ENCODE measurements at regions of chr7 and their contacts with region 1.

Region 1: GRCh38 chr7:43582503-43583423 is at the start of gene STK17A:
- DNase-seq: peak; percentile 99
- H3K4me3 ChIP-seq: peak within 1 kb of the TSS; percentile 70 to 98
- H3K27ac ChIP-seq: peak within 1 kb of the TSS; percentile 83 to 88
- H3K4me1 ChIP-seq: peaks cover 15 to 20% of the 10 kb centered on the region in 2 experiments; a peak in 3 of 4 replicates
- H3K27me3 ChIP-seq: no peaks in the 10 kb centered on the region
- CTCF ChIP-seq: peak; percentile 100
- EP300 ChIP-seq: peak in 1 of 2 experiments; percentile 3; a peak in 1 of 4 replicates
- RAD21 ChIP-seq: peak; percentile 96
- polyA plus RNA-seq, gene STK17A: 47.8 and 52.0 TPM in 2 replicates

Region 2: GRCh38 chr7:42931834-42932651 is 650.7 kb before region 1 on chr7 and contains the starts of genes MRPL32 and PSMA2:
- CTCF ChIA-PET with region 1: interaction called, 12 read pairs
- POLR2A ChIA-PET with region 1: no interaction called
- DNase-seq: peak; percentile 95
- H3K4me3 ChIP-seq: peak within 1 kb of the TSS; percentile 97 to 99
- H3K27ac ChIP-seq: peak within 1 kb of the TSS; percentile 71 to 80
- H3K4me1 ChIP-seq: peaks cover 0 to 19% of the 10 kb centered on the region in 2 experiments; a peak in 2 of 4 replicates
- H3K27me3 ChIP-seq: no peaks in the 10 kb centered on the region
- CTCF ChIP-seq: no peak
- EP300 ChIP-seq: no peak
- RAD21 ChIP-seq: no peak
- polyA plus RNA-seq, gene MRPL32: 73.1 and 87.5 TPM in 2 replicates
- polyA plus RNA-seq, gene PSMA2: 101 and 132 TPM in 2 replicates

Region 3: GRCh38 chr7:43516581-43517342 is 66.0 kb before region 1 on chr7:
- CTCF ChIA-PET with region 1: interaction called, 27 read pairs
- POLR2A ChIA-PET with region 1: no interaction called
- DNase-seq: no peak
- H3K4me3 ChIP-seq: no peak overlapping the region
- H3K27ac ChIP-seq: no peak overlapping the region
- H3K4me1 ChIP-seq: peaks cover 0 to 3% of the 10 kb centered on the region in 2 experiments; a peak in 1 of 4 replicates
- H3K27me3 ChIP-seq: peaks cover 31% of the 10 kb centered on the region; the same call in 1 of the 2 replicates
- CTCF ChIP-seq: no peak
- EP300 ChIP-seq: no peak
- RAD21 ChIP-seq: no peak

Region 4: GRCh38 chr7:43602271-43602670 is 19.5 kb after region 1 on chr7:
- CTCF ChIA-PET with region 1: interaction called, 28 read pairs
- POLR2A ChIA-PET with region 1: no interaction called
- DNase-seq: no peak
- H3K4me3 ChIP-seq: no peak overlapping the region
- H3K27ac ChIP-seq: no peak overlapping the region
- H3K4me1 ChIP-seq: no peaks in the 10 kb centered on the region; a peak in 1 of 4 replicates
- H3K27me3 ChIP-seq: no peaks in the 10 kb centered on the region
- CTCF ChIP-seq: no peak
- EP300 ChIP-seq: no peak
- RAD21 ChIP-seq: no peak

Region 5: GRCh38 chr7:43686991-43687390 is 104.2 kb after region 1 on chr7:
- CTCF ChIA-PET with region 1: interaction called, 48 read pairs
- POLR2A ChIA-PET with region 1: no interaction called
- DNase-seq: no peak
- H3K4me3 ChIP-seq: no peak overlapping the region
- H3K27ac ChIP-seq: no peak overlapping the region
- H3K4me1 ChIP-seq: no peaks in the 10 kb centered on the region; a peak in 1 of 4 replicates
- H3K27me3 ChIP-seq: no peaks in the 10 kb centered on the region
- CTCF ChIP-seq: no peak
- EP300 ChIP-seq: no peak
- RAD21 ChIP-seq: no peak

Region 6: DNA sequence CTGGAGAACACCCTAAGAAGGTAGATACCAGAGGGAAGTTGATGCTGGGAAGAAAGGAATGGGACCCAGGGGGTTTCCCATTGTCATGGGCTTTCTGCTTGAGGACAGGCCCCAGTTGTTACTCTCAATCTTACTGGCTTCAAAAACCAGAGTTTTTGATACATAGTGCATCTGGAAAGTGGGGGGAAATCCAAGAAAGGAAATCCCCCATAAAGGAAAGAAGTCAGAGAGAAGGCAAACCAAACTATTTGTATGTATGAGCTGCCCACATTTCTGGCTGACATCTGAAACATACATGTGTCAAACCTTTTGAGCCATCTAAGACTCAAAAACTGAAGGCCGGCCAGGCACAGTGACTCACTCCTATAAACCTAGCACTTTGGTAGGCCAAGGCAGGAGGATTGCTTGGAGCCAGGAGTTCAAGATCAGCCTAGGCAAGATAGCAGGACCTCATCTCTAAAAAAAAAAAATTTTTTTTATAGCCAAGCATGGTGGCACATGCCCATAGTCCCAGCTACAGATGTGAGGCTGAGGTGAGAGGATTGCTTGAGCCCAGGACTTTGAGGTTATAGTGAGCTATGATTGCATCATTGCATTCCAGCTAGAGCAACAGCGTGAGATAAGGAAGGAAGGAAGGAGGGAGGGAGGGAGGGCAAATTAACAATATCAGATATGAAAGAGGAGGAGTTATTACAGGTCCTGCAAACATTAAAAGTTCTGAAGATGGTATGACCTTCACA is 153.2 kb after region 1 on chr7:
- CTCF ChIA-PET with region 1: interaction called, 43 read pairs
- POLR2A ChIA-PET with region 1: no interaction called
- DNase-seq: no peak
- H3K4me3 ChIP-seq: no peak overlapping the region
- H3K27ac ChIP-seq: no peak overlapping the region
- H3K4me1 ChIP-seq: no peaks in the 10 kb centered on the region
- H3K27me3 ChIP-seq: no peaks in the 10 kb centered on the region
- CTCF ChIP-seq: no peak
- EP300 ChIP-seq: no peak
- RAD21 ChIP-seq: no peak

Region 7: DNA sequence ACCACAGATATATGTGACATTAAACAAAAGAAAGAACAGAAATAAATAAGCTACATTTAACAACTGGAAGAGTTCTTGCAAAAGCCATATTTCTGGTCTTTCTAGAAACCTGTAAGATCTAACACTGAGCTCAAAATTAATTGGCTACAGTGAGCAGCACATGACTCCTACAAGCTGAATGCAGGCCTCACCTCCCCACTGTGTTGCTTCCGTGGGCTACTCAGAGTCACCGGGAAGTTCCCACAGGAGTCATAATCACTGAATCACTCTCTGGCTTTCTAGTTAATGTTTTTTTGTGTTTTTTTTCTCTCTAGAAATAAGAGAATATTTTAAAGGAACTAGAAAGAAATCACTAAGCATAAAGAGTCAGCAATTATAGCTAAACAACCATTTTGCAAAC is 296.7 kb after region 1 on chr7:
- CTCF ChIA-PET with region 1: no interaction called
- POLR2A ChIA-PET with region 1: no interaction called
- DNase-seq: no peak
- H3K4me3 ChIP-seq: no peak overlapping the region
- H3K27ac ChIP-seq: peak overlapping the region; percentile 30 to 45; a peak in 3 of 4 replicates
- H3K4me1 ChIP-seq: peaks cover 0 to 9% of the 10 kb centered on the region in 2 experiments; a peak in 3 of 4 replicates
- H3K27me3 ChIP-seq: no peaks in the 10 kb centered on the region
- CTCF ChIP-seq: no peak
- EP300 ChIP-seq: no peak
- RAD21 ChIP-seq: no peak

Region 8: DNA sequence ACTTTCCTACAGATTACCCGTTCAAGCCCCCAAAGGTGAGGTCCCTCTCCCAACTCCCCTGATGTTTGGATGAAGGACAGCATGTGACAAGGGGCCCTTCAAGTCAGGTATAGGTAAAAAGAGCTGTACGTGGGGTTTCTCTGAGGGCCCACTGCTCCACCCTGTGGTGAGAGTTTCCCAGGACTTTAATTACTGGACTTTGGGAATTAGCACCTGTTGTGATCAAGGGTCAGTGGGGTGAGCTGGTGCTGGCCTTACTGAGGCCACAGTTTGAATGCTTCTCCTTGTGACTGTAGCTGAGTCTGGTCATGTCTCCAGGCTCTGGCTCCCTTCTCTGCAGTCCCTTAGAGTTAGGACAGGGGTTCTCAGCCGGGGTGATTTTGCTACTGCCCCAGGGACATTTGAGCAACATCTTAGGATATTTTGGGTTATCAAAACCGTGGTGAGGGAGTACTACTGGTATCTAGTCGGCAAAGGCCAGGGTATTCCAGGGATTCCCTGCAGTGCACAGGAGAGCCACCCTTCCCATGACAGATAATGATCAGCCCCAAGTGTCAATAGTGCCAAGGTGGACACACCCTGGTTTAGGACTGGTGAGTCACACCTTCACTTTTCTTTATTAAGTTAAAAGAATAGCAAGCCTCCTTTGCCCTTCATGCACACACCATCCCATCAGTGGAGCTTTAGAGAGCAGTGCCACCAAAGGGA is 360.4 kb after region 1 on chr7:
- CTCF ChIA-PET with region 1: interaction called, 10 read pairs
- POLR2A ChIA-PET with region 1: no interaction called
- DNase-seq: no peak
- H3K4me3 ChIP-seq: no peak overlapping the region
- H3K27ac ChIP-seq: no peak overlapping the region; a peak in 1 of 4 replicates
- H3K4me1 ChIP-seq: peaks cover 0 to 24% of the 10 kb centered on the region in 2 experiments; a peak in 2 of 4 replicates
- H3K27me3 ChIP-seq: no peaks in the 10 kb centered on the region
- CTCF ChIP-seq: peak; percentile 21; the same call in 1 of the 2 replicates
- EP300 ChIP-seq: no peak
- RAD21 ChIP-seq: peak; percentile 58

Measured in SK-N-SH (cell line).